ENCODE measurements at regions of chr17 and their contacts with region 1.

Region 1: GRCh38 chr17:38415250-38416194 is 12.7 kb upstream of the ARHGAP23 start:
- DNase-seq: no peak
- H3K4me3 ChIP-seq: peak overlapping the region in 1 of 4 donors; percentile 9
- H3K27ac ChIP-seq: no peak overlapping the region
- H3K4me1 ChIP-seq: peaks cover 17 to 36% (median 22%) of the 10 kb centered on the region in 3 donors
- H3K27me3 ChIP-seq: peaks cover 0 to 58% (median 6%) of the 10 kb centered on the region in 4 donors
- CTCF ChIP-seq: no peak
- POLR2A ChIP-seq: no peak

Region 2: GRCh38 chr17:38351412-38352222 is 63.9 kb before region 1 on chr17 and contains the start of gene SOCS7:
- intact Hi-C with region 1: loop called (anchors 2 kb)
- DNase-seq: peak; percentile 29
- H3K4me3 ChIP-seq: peak within 1 kb of the TSS; percentile 70 to 100 (median 85)
- H3K27ac ChIP-seq: peak within 1 kb of the TSS; percentile 87 to 95 (median 88)
- H3K4me1 ChIP-seq: peaks cover 17 to 55% (median 37%) of the 10 kb centered on the region in 3 donors
- H3K27me3 ChIP-seq: no peaks in the 10 kb centered on the region
- CTCF ChIP-seq: peak in 1 of 6 experiments; percentile 13
- POLR2A ChIP-seq: peak in 3 of 4 donors; percentile 24 to 73 (median 29)
- total RNA-seq, gene SOCS7: 5.9 to 21.8 (median 15.0) TPM

Region 3: DNA sequence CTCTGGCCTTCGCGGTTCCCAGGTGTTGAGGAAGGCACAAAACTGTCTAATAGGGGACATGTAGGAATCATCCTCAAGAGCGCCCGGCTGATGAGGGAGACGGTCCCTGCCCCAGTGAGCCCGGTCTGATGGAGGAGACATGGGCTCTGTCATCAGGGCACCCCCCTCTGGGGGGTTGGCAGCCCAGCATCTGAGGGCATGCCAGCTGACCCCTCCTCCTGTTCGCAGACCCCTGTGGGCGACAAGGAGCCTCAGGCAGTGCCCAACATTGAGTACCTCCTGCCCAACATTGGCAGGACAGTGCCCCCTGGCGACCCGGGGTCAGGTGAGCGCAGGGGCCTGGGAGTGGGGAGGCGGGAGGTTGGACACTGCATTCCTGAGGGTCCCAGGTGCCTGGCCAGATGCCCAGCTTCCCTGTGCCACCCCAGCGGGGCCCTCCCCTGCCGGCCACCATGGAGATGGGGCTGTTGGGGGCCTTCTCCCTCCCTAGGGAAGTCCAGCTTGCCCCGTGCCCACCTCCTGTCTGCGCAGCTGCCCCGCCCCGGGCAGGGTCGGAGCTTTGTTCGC is 82.7 kb after region 1 on chr17:
- intact Hi-C with region 1: no loop called
- DNase-seq: no peak
- H3K4me3 ChIP-seq: no peak overlapping the region
- H3K27ac ChIP-seq: no peak overlapping the region
- H3K4me1 ChIP-seq: no peaks in the 10 kb centered on the region
- H3K27me3 ChIP-seq: no peaks in the 10 kb centered on the region
- CTCF ChIP-seq: no peak
- POLR2A ChIP-seq: no peak

Region 4: GRCh38 chr17:38584350-38584925 is 168.9 kb after region 1 on chr17:
- intact Hi-C with region 1: no loop called
- DNase-seq: no peak
- H3K4me3 ChIP-seq: no peak overlapping the region
- H3K27ac ChIP-seq: no peak overlapping the region
- H3K4me1 ChIP-seq: peaks cover 5 to 17% (median 6%) of the 10 kb centered on the region in 3 donors
- H3K27me3 ChIP-seq: peaks cover 0 to 90% (median 2%) of the 10 kb centered on the region in 4 donors
- CTCF ChIP-seq: peak; percentile 81 to 96 (median 90)
- POLR2A ChIP-seq: no peak

Measured in esophagus squamous epithelium (tissue), 5 donors.